Esophagus muscularis mucosa (tissue), 4 donors: ENCODE measurements at regions of chr13 and their contacts with region 1.

Region 1: DNA sequence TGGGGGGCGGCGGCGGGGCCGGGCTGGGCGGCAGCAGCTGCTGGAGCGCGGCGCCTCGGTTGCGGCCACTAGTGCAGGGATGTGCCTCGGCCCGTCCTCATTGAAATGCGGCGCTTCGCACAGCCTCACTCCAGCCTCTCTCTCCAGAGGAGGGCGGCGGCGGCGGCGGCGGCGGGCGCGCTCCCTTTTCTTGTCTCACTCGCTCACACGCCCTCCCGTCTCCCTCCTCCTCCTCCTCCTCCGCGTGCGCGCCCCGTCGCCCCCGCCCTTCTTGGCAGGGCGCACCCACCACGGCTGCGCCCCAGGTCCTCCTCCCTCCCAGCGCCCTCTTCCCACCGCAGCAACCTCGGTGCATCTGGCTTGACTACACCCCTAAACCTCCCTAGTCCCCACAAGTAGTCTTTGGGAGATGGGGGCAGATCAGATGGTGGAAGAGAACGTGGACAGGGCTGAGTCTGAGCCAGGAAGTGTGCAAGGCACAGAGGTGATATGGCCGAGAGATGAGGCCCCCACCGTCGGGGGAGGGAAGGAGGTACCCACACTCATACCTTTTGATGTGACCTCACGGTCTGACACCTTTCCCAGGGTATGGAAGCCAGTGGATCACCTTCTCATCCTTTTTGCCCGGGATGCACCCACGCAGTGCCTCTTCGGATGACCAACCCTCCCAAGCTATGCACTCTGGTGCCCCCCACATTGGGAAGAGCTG is at the start of gene DCLK1:
- DNase-seq: no peak
- H3K4me3 ChIP-seq: peak within 1 kb of the TSS; percentile 58 to 86 (median 68)
- H3K27ac ChIP-seq: peak within 1 kb of the TSS; percentile 45 to 71 (median 63)
- H3K4me1 ChIP-seq: peaks cover 6 to 33% (median 17%) of the 10 kb centered on the region in 4 donors
- H3K27me3 ChIP-seq: peaks cover 0 to 4% (median 0%) of the 10 kb centered on the region in 4 donors
- CTCF ChIP-seq: no peak
- EP300 ChIP-seq: no peak
- POLR2A ChIP-seq: no peak
- total RNA-seq, gene DCLK1: 20.5 to 40.1 (median 28.7) TPM

Region 2: GRCh38 chr13:35984776-35985453 is 146.5 kb before region 1 on chr13:
- intact Hi-C with region 1: loop called (anchors 10 kb)
- DNase-seq: no peak
- H3K4me3 ChIP-seq: no peak overlapping the region
- H3K27ac ChIP-seq: no peak overlapping the region
- H3K4me1 ChIP-seq: peaks cover 0 to 6% (median 2%) of the 10 kb centered on the region in 4 donors
- H3K27me3 ChIP-seq: no peaks in the 10 kb centered on the region
- CTCF ChIP-seq: no peak
- EP300 ChIP-seq: no peak
- POLR2A ChIP-seq: no peak

Region 3: DNA sequence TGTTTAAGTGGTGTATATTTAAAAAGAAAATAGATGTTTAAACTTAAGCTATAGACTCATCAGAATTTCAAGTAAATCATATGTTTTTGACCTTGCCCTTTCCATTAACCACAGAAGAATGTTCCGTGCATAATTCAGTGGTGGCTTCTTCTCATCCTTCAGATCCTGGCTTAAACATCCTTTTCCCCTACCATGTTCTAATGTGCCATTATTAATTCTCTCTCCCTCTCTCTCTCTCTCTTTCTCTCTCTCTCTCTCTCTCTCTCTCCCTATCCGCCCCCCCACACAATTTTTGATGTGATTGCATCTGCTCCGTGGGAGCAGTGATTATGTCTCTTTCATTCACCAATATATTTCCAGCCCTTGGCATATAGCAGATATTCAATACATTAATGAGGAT is 116.6 kb before region 1 on chr13:
- intact Hi-C with region 1: no loop called
- DNase-seq: no peak
- H3K4me3 ChIP-seq: no peak overlapping the region
- H3K27ac ChIP-seq: no peak overlapping the region
- H3K4me1 ChIP-seq: no peaks in the 10 kb centered on the region
- H3K27me3 ChIP-seq: no peaks in the 10 kb centered on the region
- CTCF ChIP-seq: no peak
- EP300 ChIP-seq: no peak
- POLR2A ChIP-seq: no peak

Region 4: DNA sequence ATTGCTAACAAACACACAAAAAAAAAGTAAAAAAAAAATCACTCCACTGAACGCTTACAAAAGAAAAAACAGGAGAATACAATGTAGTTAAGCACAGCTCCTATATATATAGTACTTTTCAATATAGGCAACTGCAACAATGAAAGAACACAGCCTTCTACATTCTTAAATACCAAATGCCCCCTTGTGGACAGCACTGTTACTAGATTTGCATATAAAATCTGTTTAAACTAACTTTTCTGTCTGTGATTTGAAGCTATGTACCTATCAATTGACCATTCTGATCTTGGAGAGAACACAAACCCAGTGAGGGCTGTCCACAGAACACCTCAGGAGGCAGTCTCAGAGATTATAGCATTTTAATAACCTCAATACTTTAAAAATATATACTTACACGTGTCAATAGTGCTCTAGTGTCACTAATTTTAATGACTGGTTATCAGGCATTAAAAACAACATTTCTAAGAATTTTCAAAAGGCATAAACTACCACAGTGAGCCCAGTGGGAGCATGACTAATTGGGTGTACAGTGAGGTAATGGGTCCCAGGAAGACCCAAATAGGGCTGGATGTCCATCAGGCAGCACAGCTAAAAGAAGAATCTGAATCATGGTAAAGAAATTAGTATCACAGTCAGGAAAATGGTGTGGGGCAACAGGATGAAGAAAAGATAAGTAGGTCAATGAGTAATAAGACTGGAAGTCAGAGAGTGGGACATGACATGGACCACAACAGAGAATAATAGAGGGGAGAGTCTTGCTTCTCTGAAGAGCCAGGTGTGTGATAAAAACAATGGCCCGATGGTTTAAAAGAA is 144.0 kb after region 1 on chr13:
- intact Hi-C with region 1: loop called (anchors 5 kb)
- DNase-seq: no peak
- H3K4me3 ChIP-seq: no peak overlapping the region
- H3K27ac ChIP-seq: no peak overlapping the region
- H3K4me1 ChIP-seq: no peaks in the 10 kb centered on the region
- H3K27me3 ChIP-seq: no peaks in the 10 kb centered on the region
- CTCF ChIP-seq: peak; percentile 60 to 73 (median 64)
- EP300 ChIP-seq: no peak
- POLR2A ChIP-seq: no peak